Lower leg skin (tissue), 4 donors: ENCODE measurements at regions of chr6 and their contacts with region 1.

Region 1: DNA sequence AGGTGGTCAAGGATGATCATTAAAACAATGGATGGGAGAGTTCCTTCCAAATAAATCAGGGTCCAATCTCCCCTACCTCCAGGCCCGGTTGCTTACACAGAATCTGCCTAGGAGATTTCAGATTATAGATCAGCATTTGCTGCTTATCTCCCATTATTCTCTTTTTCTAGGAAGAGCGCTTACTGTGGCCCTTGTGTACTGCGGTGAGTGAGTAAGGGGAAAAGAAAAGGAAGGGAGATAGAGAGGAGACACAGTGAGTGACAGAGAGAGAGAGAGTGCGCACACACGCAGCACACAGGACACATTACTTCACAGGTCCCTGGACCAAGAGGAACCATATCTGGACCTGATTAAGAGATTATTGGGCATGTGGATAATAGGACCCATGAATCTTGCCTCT is 6.2 kb downstream of the LATS1 start:
- DNase-seq: no peak
- H3K4me3 ChIP-seq: no peak overlapping the region
- CTCF ChIP-seq: no peak
- POLR2A ChIP-seq: no peak

Region 2: DNA sequence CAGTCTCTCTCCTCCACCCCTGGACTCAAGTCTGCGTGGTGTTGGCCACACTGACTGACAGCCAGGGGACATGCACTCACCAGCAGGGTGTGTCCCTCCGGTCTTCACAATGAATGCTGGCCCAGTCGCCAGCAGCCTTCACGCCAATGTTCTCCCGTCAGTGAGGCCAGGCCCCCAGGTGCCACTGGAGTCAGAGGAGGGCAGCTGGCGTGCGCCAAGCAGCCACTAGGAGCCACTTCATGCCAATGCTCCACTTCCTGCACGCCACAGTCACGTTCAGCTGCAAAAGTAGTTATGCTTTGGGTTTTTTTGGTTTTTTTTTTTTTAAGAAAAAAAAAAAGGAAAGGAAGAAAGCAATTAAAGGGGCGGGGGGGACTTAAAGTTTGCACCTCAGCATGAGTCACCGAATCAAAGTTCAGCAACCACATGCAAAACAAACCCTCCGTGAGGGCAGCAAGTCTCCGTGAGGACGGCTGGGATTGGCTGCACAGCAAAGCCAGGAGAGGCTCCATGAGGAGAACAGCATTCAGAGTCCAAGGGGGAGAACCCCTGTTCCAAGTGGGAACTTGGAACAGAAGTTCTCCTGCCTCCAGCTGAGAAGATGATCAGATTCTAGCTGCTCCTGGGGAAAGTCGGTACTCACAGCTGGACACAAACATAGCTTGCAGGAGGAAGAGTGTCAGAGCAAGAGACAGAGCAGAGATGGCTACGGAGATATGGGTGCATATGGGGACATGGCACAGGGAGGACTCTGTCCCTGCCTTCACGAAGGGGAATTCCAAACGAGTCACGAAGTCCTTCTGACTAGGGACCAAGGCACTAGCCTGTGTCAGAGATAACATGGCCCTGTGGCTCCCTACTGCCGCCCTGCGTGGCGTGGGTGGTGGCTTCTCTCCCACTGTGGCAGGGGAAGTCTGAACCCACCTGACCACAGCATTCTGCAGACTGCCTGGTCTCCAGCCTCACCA is 226.7 kb before region 1 on chr6 and contains the start of gene ZC3H12D:
- intact Hi-C with region 1: no loop called
- DNase-seq: peak; percentile 45 to 91
- H3K4me3 ChIP-seq: no peak within 1 kb of the TSS
- CTCF ChIP-seq: no peak
- POLR2A ChIP-seq: no peak
- total RNA-seq, gene ZC3H12D: 0.42 to 2.2 (median 0.92) TPM

Region 3: DNA sequence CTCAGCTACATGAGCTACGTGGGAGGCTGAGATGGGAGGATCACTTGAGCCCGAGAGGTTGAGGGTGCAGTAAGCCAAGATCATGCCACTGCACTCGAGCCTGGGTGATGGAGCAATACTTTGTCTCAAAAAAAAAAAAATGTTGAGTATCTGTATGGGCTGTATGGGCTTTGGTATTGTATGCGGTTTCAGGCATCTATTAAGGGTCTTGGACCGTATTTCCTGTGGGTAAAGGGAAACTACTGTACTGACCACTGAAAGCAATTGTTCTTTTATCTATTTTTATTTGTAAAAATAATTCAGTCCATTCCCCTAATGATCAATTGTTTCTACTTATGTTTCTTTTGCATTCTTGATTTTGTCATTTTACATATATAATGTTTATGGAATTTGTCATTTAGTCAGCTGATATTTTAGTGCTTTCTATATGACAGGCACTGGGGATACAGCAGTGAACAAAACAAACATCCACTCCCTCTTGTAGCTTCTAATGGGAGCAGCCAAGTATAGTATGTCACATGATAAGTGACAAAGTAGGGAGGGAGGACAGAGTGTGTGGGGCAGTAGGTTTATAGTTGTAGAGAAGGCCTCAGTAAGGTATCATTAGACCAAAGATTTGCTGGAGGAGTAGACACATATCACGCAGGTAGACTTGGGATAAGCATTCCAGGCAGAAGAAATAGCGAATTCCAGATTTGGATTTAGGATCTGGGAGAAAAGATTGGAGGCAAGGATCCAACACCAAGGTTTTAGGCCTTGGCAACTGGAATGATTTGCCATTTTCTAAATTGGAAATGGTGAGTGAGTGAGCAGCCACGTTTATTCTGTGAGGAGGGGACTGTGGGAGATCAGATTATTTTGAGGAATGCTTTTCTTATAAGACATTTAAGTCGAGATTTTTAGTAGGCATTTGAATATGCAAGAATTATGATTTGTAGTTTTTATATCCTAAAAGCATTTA is 43.9 kb after region 1 on chr6:
- intact Hi-C with region 1: loop called (anchors 2 kb)
- DNase-seq: no peak
- H3K4me3 ChIP-seq: no peak overlapping the region
- CTCF ChIP-seq: no peak
- POLR2A ChIP-seq: no peak